ENCODE measurements at regions of chr3 and their contacts with region 1.

Region 1: GRCh38 chr3:14651440-14652251 is at the start of gene CCDC174:
- DNase-seq: peak; percentile 100
- H3K4me3 ChIP-seq: peak within 1 kb of the TSS; percentile 84 to 95 (median 87)
- H3K27ac ChIP-seq: peak within 1 kb of the TSS; percentile 98
- H3K4me1 ChIP-seq: peaks cover 9 to 46% (median 24%) of the 10 kb centered on the region in 4 experiments
- H3K27me3 ChIP-seq: no peaks in the 10 kb centered on the region

Region 2: DNA sequence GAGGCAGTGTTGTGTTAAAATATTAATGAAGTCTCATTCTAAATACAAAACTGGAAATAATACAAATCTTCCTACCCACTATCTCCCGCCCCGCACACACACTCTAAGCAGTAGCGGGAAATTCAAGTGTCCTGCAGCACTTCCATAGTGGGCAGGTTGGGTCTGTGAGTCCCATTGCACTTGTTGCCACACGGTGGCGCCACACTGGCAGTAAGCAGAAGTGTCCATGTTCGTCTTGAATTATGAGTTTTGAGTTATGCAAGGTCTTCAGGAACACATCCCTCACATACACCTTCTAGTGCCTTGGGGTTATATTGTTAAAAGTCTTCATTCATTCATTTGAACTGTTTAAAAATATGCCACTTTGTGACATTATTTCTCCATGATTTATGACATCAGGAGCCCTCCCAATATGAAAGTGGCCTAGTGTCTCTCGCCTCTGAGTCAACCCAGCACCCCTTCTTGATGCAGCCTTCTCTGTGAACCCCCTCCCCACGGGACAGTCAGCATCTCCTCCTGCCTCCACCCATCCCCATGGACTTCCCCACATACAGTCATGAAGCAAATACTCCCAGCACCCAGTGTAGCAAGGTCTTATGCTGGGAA is 17.7 kb before region 1 on chr3:
- CTCF ChIA-PET with region 1: interaction called, 14 read pairs
- POLR2A ChIA-PET with region 1: interaction called, 3 read pairs
- DNase-seq: peak; percentile 78 to 88 (median 85)
- H3K4me3 ChIP-seq: no peak overlapping the region
- H3K27ac ChIP-seq: no peak overlapping the region
- H3K4me1 ChIP-seq: no peaks in the 10 kb centered on the region
- H3K27me3 ChIP-seq: peaks cover 0 to 12% (median 6%) of the 10 kb centered on the region in 5 experiments

Region 3: GRCh38 chr3:14725013-14725412 is 73.4 kb after region 1 on chr3:
- CTCF ChIA-PET with region 1: no interaction called
- POLR2A ChIA-PET with region 1: no interaction called
- DNase-seq: no peak
- H3K4me3 ChIP-seq: no peak overlapping the region
- H3K27ac ChIP-seq: no peak overlapping the region
- H3K4me1 ChIP-seq: no peaks in the 10 kb centered on the region
- H3K27me3 ChIP-seq: no peaks in the 10 kb centered on the region

Measured in common myeloid progenitor, CD34-positive (primary cell).